PC-9 (cell line): ENCODE measurements at regions of chrX and their contacts with region 1.

Region 1: GRCh38 chrX:77899081-77899828 is at the start of gene COX7B:
- DNase-seq: peak; percentile 65 to 94
- H3K4me3 ChIP-seq: peak within 1 kb of the TSS; percentile 88
- H3K27ac ChIP-seq: peak within 1 kb of the TSS; percentile 89
- H3K4me1 ChIP-seq: peaks cover 3% of the 10 kb centered on the region; the same call in 1 of the 2 replicates
- H3K27me3 ChIP-seq: no peaks in the 10 kb centered on the region
- CTCF ChIP-seq: no peak; the same call in 1 of the 2 replicates
- total RNA-seq, gene COX7B: 273 and 356 TPM in 2 replicates

Region 2: DNA sequence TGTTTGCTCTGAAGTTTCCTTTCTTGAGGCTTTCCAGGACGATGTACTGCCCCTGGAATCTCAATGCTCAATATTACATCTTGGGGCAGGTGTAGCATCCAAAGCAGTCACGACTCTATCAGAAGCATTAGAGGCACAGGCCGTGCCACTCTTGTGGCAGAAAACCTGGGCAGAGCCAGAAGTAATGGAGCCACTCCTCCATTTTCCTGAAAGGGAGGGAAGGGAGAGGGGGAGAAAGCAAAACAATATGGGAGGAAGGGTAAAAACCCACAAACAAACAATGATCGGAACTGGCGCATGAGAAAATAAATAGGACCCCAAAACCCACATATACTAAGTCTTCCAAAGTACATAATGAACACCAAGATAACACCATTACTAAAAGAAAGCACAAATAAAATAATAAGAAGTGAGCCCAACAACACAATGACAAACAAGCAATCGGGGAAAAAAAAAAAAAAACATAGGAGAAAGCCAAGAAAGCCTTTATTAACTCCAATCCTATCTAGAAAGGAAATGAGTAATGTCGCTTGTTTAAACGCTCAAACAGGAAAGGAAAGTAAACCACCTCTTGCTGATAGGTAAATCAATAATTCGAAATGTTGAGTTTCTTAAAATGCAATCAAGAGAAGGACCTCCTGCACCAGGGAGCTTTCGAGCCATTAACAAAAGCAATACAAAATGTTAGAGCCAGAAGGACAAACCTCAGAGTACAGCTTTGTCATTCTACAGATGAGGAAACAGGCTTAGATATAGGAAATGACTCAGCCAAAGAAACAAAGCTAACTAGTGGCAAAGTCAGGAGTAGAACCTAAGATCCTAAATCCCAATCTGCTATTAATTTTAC is 230.6 kb before region 1 on chrX:
- CTCF ChIA-PET with region 1: no interaction called
- POLR2A ChIA-PET with region 1: interaction called, 13 read pairs
- intact Hi-C with region 1: no loop called
- DNase-seq: no peak
- H3K4me3 ChIP-seq: no peak overlapping the region
- H3K27ac ChIP-seq: peak overlapping the region; percentile 30; the same call in 1 of the 2 replicates
- H3K4me1 ChIP-seq: no peaks in the 10 kb centered on the region
- H3K27me3 ChIP-seq: no peaks in the 10 kb centered on the region
- CTCF ChIP-seq: no peak

Region 3: DNA sequence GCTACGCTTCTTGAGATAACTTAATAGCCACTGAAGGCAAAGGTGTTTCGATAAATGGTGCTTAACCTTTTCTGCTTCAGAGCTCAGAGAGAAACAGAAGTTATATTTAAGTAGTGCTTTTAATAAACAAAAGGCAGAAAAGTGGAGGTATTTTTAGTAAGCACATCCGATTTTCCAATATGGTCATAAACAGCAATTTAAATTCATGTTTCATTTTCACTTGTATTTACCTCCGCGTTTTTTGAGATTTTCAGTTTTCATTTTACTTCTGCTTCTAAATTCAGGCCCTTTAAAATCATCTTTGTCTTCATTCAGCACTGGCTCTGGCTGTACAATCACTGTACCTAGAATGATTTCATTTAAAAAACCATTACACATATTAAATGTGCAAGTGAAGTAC is 205.7 kb before region 1 on chrX:
- CTCF ChIA-PET with region 1: no interaction called
- POLR2A ChIA-PET with region 1: no interaction called
- intact Hi-C with region 1: no loop called
- DNase-seq: no peak
- H3K4me3 ChIP-seq: no peak overlapping the region
- H3K27ac ChIP-seq: no peak overlapping the region
- H3K4me1 ChIP-seq: no peaks in the 10 kb centered on the region
- H3K27me3 ChIP-seq: no peaks in the 10 kb centered on the region
- CTCF ChIP-seq: no peak

Region 4: GRCh38 chrX:78119521-78120227 is 220.4 kb after region 1 on chrX:
- CTCF ChIA-PET with region 1: no interaction called
- POLR2A ChIA-PET with region 1: no interaction called
- intact Hi-C with region 1: loop called (anchors 10 kb)
- DNase-seq: no peak
- H3K4me3 ChIP-seq: no peak overlapping the region
- H3K27ac ChIP-seq: no peak overlapping the region
- H3K4me1 ChIP-seq: no peaks in the 10 kb centered on the region
- H3K27me3 ChIP-seq: no peaks in the 10 kb centered on the region
- CTCF ChIP-seq: peak; percentile 54; the same call in 1 of the 2 replicates